PC-3 (cell line): ENCODE measurements at regions of chr6 and their contacts with region 1.

Region 1: GRCh38 chr6:93792746-93793145 is 373.4 kb upstream of the EPHA7 start:
- DNase-seq: no peak
- ATAC-seq: no peak
- H3K4me3 ChIP-seq: no peak overlapping the region
- H3K27ac ChIP-seq: no peak overlapping the region
- H3K4me1 ChIP-seq: peaks cover 4% of the 10 kb centered on the region; the same call in 1 of the 2 replicates
- H3K27me3 ChIP-seq: no peaks in the 10 kb centered on the region
- CTCF ChIP-seq: no peak

Region 2: DNA sequence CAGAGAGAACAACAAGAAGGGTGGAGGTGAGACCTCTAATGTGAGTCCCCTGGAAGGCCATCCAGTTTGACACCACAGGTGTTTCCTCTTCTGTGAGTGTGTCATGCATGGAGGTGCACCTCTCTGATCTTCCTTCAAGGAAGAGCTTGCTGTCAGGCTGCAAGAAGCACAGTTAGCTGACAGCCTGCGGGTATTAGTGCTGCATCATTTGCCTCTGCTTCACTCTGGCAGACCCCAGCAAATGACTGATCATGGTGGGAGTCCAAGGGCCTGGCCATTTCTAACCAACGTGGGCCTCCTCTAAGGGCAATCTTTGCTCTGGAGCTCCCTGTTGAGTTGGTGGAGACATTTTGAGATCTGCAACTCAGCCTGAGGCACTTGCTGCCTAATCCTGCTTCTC is 579.7 kb before region 1 on chr6:
- CTCF ChIA-PET with region 1: no interaction called
- POLR2A ChIA-PET with region 1: no interaction called
- intact Hi-C with region 1: no loop called
- DNase-seq: no peak
- ATAC-seq: no peak
- H3K4me3 ChIP-seq: no peak overlapping the region
- H3K27ac ChIP-seq: no peak overlapping the region
- H3K4me1 ChIP-seq: no peaks in the 10 kb centered on the region
- H3K27me3 ChIP-seq: no peaks in the 10 kb centered on the region
- CTCF ChIP-seq: no peak

Region 3: GRCh38 chr6:93727447-93727846 is 65.3 kb before region 1 on chr6:
- CTCF ChIA-PET with region 1: no interaction called
- POLR2A ChIA-PET with region 1: no interaction called
- intact Hi-C with region 1: loop called (anchors 5 kb)
- DNase-seq: peak; percentile 55
- ATAC-seq: peak; percentile 93
- H3K4me3 ChIP-seq: no peak overlapping the region
- H3K27ac ChIP-seq: 0 out of 2 replicates have a peak overlapping the region, but pooled peaks have one; percentile 18
- H3K4me1 ChIP-seq: 0 out of 2 replicates have a peak, but pooled peaks cover 5% of the 10 kb centered on the region
- H3K27me3 ChIP-seq: no peaks in the 10 kb centered on the region
- CTCF ChIP-seq: no peak

Region 4: GRCh38 chr6:93894521-93894920 is 101.8 kb after region 1 on chr6:
- CTCF ChIA-PET with region 1: no interaction called
- POLR2A ChIA-PET with region 1: no interaction called
- intact Hi-C with region 1: loop called (anchors 10 kb)
- DNase-seq: no peak
- ATAC-seq: no peak
- H3K4me3 ChIP-seq: no peak overlapping the region
- H3K27ac ChIP-seq: no peak overlapping the region
- H3K4me1 ChIP-seq: no peaks in the 10 kb centered on the region
- H3K27me3 ChIP-seq: no peaks in the 10 kb centered on the region
- CTCF ChIP-seq: no peak

Region 5: GRCh38 chr6:93915961-93916360 is 123.2 kb after region 1 on chr6:
- CTCF ChIA-PET with region 1: no interaction called
- POLR2A ChIA-PET with region 1: no interaction called
- intact Hi-C with region 1: no loop called
- DNase-seq: peak; percentile 31
- ATAC-seq: no peak
- H3K4me3 ChIP-seq: no peak overlapping the region
- H3K27ac ChIP-seq: no peak overlapping the region
- H3K4me1 ChIP-seq: no peaks in the 10 kb centered on the region
- H3K27me3 ChIP-seq: no peaks in the 10 kb centered on the region
- CTCF ChIP-seq: no peak